Panc1 (cell line): ENCODE measurements at regions of chr2 and their contacts with region 1.

Region 1: DNA sequence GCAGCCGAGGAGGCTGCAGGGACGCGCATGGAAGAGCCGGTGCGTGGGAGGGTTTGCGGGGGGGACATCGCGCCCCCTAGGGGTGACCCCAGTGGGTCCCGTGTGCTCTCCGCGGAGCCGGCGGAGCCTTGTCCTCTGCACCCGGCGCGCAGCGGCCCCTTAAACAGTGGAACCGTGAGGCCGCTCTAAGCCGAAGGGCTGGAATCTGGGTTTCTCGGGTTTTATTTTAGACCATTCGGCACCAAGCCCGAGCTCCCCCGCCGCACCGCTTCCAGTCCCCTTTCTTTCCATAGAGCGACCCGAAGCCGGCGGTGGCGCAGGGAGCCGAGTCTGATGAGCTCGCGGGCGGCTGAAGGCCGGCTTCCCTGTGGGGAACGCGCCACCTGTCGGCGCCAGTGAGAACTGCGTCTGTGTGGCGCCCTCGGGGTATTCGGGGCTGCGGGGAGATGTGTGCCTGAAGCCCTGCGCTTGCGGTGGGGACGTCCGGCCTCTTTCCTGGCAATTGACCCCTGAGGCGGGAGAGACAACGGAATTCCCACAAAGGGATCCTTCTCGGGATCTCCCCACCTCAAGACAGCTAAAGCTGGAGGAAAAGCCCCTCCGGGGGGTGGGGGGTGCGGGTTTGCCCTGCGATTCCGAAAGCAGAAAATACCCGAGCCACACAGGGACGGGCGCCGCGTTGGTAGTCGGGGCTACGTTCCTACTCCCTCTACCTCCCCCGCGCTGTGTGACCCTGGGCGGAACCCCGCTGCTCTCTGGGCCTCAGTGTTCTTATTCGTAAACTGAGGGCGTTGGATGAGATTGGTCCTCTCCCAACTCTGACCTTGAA is 8.2 kb upstream of the EN1 start:
- DNase-seq: no peak
- ATAC-seq: peak; percentile 90
- H3K4me3 ChIP-seq: peak overlapping the region; percentile 7 to 27; a peak in 3 of 4 replicates
- H3K27ac ChIP-seq: no peak overlapping the region
- H3K4me1 ChIP-seq: 0 out of 2 replicates have a peak, but pooled peaks cover 3% of the 10 kb centered on the region
- H3K27me3 ChIP-seq: peaks cover 13% of the 10 kb centered on the region; the same call in 1 of the 2 replicates
- CTCF ChIP-seq: peak; percentile 97

Region 2: GRCh38 chr2:118221666-118222594 is 633.7 kb before region 1 on chr2:
- CTCF ChIA-PET with region 1: interaction called, 3 read pairs
- POLR2A ChIA-PET with region 1: no interaction called
- in situ Hi-C with region 1: no loop called
- intact Hi-C with region 1: loop called (anchors 1 kb)
- DNase-seq: peak; percentile 64
- ATAC-seq: peak; percentile 94
- H3K4me3 ChIP-seq: no peak overlapping the region
- H3K27ac ChIP-seq: no peak overlapping the region
- H3K4me1 ChIP-seq: no peaks in the 10 kb centered on the region
- H3K27me3 ChIP-seq: peaks cover 24% of the 10 kb centered on the region
- CTCF ChIP-seq: peak; percentile 77

Region 3: DNA sequence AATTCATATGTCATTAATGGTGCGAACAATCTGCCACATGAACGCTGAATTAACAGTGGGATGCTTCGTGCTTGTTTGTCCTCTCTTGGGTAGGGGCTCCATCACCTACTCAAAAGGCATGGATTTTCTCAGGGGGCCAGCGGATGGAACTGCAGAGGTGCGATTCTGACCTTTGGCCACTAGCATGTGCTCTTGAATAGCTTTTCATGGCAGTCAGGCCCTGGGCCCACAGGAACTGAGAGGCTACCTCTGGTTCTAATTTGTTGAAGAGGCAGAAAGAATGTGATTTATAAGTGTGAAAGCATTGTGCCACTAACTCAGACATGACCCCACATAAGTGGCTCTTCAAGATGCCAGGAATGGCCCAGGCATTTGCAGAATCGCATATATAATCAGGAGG is 484.1 kb before region 1 on chr2:
- CTCF ChIA-PET with region 1: interaction called, 4 read pairs
- POLR2A ChIA-PET with region 1: no interaction called
- in situ Hi-C with region 1: no loop called
- intact Hi-C with region 1: loop called (anchors 5 kb)
- DNase-seq: no peak
- ATAC-seq: no peak; the same call in 1 of the 2 replicates
- H3K4me3 ChIP-seq: no peak overlapping the region
- H3K27ac ChIP-seq: no peak overlapping the region
- H3K4me1 ChIP-seq: no peaks in the 10 kb centered on the region
- H3K27me3 ChIP-seq: peaks cover 4% of the 10 kb centered on the region; the same call in 1 of the 2 replicates
- CTCF ChIP-seq: peak; percentile 82

Region 4: DNA sequence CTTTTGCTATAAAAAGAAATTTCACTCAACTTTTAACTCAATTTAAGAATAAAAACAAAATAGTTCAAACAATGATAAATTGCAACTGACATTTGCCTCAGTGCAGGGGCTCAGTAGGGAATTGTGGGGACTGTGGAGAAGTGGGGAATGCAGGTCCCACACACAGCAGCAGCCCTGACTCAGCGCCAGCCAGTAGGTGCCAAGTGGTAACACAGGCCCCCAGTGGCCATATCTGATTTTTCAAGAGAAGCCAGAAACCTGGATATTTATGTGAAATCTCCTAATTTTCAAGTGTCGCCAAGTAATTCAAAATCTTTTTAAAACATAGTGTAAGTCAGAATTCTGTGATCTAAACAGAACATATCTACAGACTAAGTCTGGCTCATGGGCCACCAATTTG is 194.5 kb before region 1 on chr2:
- CTCF ChIA-PET with region 1: no interaction called
- POLR2A ChIA-PET with region 1: no interaction called
- in situ Hi-C with region 1: no loop called
- intact Hi-C with region 1: no loop called
- DNase-seq: no peak
- ATAC-seq: no peak
- H3K4me3 ChIP-seq: no peak overlapping the region
- H3K27ac ChIP-seq: no peak overlapping the region
- H3K4me1 ChIP-seq: no peaks in the 10 kb centered on the region
- H3K27me3 ChIP-seq: no peaks in the 10 kb centered on the region
- CTCF ChIP-seq: no peak

Region 5: DNA sequence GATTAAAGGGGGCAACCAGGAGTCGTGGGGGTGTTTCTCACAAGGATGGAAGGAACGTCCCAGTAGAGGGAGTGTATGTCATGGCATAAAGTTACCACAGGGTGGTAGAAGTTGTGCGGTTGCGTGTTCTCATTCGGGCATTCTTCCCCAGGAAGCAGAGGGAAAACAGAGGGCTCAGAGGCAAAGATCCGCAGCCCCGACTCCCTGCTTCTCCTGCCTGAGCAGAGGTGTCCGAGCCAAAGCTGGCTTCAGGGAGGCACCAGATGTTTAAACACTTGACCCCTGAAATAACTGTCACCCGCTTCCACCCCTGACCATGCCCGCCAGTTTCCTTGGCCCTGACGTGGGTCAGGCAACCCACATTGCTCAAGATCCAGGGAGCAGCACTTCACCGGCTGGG is 91.9 kb before region 1 on chr2:
- CTCF ChIA-PET with region 1: no interaction called
- POLR2A ChIA-PET with region 1: no interaction called
- in situ Hi-C with region 1: no loop called
- intact Hi-C with region 1: loop called (anchors 10 kb)
- DNase-seq: no peak
- ATAC-seq: no peak
- H3K4me3 ChIP-seq: no peak overlapping the region
- H3K27ac ChIP-seq: no peak overlapping the region
- H3K4me1 ChIP-seq: no peaks in the 10 kb centered on the region
- H3K27me3 ChIP-seq: no peaks in the 10 kb centered on the region; the same call in 1 of the 2 replicates
- CTCF ChIP-seq: peak; percentile 13; the same call in 1 of the 2 replicates

Region 6: GRCh38 chr2:119011162-119011909 is 155.7 kb after region 1 on chr2:
- CTCF ChIA-PET with region 1: interaction called, 11 read pairs
- POLR2A ChIA-PET with region 1: no interaction called
- in situ Hi-C with region 1: no loop called
- intact Hi-C with region 1: no loop called
- DNase-seq: no peak
- ATAC-seq: peak; percentile 95
- H3K4me3 ChIP-seq: peak overlapping the region; percentile 13 to 33; a peak in 3 of 4 replicates
- H3K27ac ChIP-seq: no peak overlapping the region
- H3K4me1 ChIP-seq: no peaks in the 10 kb centered on the region
- H3K27me3 ChIP-seq: peaks cover 29% of the 10 kb centered on the region
- CTCF ChIP-seq: peak; percentile 90